CD4-positive, alpha-beta T cell (primary cell): ENCODE measurements at regions of chr7 and their contacts with region 1.

Region 1: GRCh38 chr7:148575640-148576411 is 14.7 kb upstream of the C7orf33 start:
- DNase-seq: peak; percentile 50 to 79 (median 64)
- ATAC-seq: peak; percentile 81
- H3K4me3 ChIP-seq: no peak overlapping the region
- H3K4me3 Mint-ChIP-seq: no peak overlapping the region
- H3K27ac ChIP-seq: no peak overlapping the region
- H3K27ac Mint-ChIP-seq: no peak overlapping the region
- H3K4me1 ChIP-seq: peaks cover 5% of the 10 kb centered on the region
- H3K4me1 Mint-ChIP-seq: peaks cover 4% of the 10 kb centered on the region
- H3K27me3 ChIP-seq: no peaks in the 10 kb centered on the region
- H3K27me3 Mint-ChIP-seq: no peaks in the 10 kb centered on the region
- CTCF ChIP-seq: peak; percentile 82

Region 2: GRCh38 chr7:148773334-148773733 is 197.5 kb after region 1 on chr7:
- CTCF ChIA-PET with region 1: interaction called, 7 read pairs
- POLR2A ChIA-PET with region 1: no interaction called
- intact Hi-C with region 1: loop called (anchors 5 to 10 kb)
- DNase-seq: peak in 12 of 14 experiments; percentile 7 to 73 (median 24)
- ATAC-seq: peak; percentile 92
- H3K4me3 ChIP-seq: no peak overlapping the region
- H3K4me3 Mint-ChIP-seq: peak overlapping the region; percentile 13
- H3K27ac ChIP-seq: peak overlapping the region; percentile 42 to 66
- H3K27ac Mint-ChIP-seq: peak overlapping the region; percentile 47
- H3K4me1 ChIP-seq: peaks cover 25% of the 10 kb centered on the region
- H3K4me1 Mint-ChIP-seq: peaks cover 29% of the 10 kb centered on the region
- H3K27me3 ChIP-seq: no peaks in the 10 kb centered on the region
- H3K27me3 Mint-ChIP-seq: no peaks in the 10 kb centered on the region
- CTCF ChIP-seq: no peak